HepG2 (cell line): ENCODE measurements at regions of chr17 and their contacts with region 1.

Region 1: DNA sequence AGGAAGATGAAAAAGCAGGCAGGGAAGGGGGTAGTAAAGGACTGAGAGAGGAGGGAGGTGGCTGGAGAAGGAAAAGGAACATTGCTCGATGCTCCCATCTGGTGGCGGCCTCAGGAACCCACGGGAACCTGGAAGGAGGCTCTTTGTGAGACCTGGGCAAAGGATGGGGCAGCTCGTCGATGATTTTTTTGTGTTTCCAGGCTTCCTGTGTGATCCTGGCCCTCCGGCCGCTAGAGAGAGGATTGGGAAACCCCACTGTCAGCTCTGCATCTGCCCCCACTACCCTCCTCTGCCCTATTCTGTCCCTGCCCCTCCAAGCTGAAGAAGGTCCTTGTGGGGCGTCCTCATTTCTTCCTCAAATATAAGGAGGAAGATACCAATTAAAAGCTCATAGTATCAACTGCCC is 6.6 kb downstream of the WFIKKN2 start:
- DNase-seq: peak; percentile 66
- ATAC-seq: peak; percentile 61
- H3K4me3 ChIP-seq: no peak overlapping the region
- H3K27ac ChIP-seq: no peak overlapping the region
- H3K4me1 ChIP-seq: peaks cover 77% of the 10 kb centered on the region
- H3K27me3 ChIP-seq: peaks cover 8 to 77% of the 10 kb centered on the region in 2 experiments; a peak in 4 of 5 replicates
- CTCF ChIP-seq: peak; percentile 93
- EP300 ChIP-seq: no peak
- POLR2A ChIP-seq: no peak
- RAD21 ChIP-seq: peak; percentile 84

Region 2: DNA sequence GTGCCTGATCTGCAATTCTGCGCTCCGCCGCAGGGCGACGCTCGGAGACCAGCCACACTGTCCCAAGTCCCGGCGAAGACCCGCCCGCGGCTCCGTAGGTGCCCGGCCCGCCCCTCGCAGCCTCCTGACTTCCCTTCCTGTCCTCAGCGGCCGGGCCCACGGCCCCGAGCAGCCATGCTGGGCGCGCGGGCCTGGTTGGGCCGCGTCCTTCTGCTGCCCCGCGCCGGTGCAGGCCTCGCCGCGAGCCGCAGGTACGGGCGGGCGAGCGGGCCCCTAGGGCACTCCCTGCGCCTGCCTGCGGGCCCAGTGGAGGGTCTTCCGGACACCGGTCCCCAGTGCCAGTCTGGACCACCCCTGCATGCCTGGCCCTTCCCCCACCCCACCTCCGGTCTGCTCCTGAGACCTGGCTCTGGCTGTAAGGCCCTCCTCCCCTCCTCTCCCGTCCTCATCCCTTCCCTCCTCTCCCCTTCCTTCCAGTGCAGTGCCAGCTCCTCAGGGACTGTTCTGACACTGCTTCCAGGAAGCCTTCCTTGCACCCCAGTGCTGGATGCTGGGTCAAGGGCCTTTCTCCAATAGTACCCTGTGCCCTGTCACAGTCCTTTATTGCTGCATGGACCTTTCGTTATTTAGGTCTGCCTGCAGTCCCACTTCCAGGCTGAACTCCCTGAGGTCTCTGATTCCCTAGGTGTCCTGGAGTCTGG is 294.8 kb before region 1 on chr17 and contains the start of gene SPATA20:
- CTCF ChIA-PET with region 1: interaction called, 4 read pairs
- POLR2A ChIA-PET with region 1: no interaction called
- in situ Hi-C with region 1: no loop called
- intact Hi-C with region 1: loop called (anchors 2 kb)
- DNase-seq: peak; percentile 88
- ATAC-seq: peak; percentile 76
- H3K4me3 ChIP-seq: peak within 1 kb of the TSS; percentile 63 to 87 (median 79)
- H3K27ac ChIP-seq: peak within 1 kb of the TSS; percentile 62
- H3K4me1 ChIP-seq: peaks cover 74% of the 10 kb centered on the region
- H3K27me3 ChIP-seq: no peaks in the 10 kb centered on the region; a peak in 1 of 5 replicates
- CTCF ChIP-seq: peak; percentile 99
- EP300 ChIP-seq: peak in 1 of 2 experiments; percentile 31; a peak in 1 of 4 replicates
- POLR2A ChIP-seq: peak; percentile 81 to 89
- RAD21 ChIP-seq: peak; percentile 100
- total RNA-seq, gene SPATA20: 35.7 and 64.8 TPM in 2 replicates

Region 3: GRCh38 chr17:50783193-50783660 is 58.7 kb before region 1 on chr17:
- CTCF ChIA-PET with region 1: interaction called, 94 read pairs
- POLR2A ChIA-PET with region 1: no interaction called
- in situ Hi-C with region 1: loop called (anchors 5 kb)
- intact Hi-C with region 1: loop called (anchors 1 kb)
- DNase-seq: peak; percentile 86
- ATAC-seq: peak; percentile 97
- H3K4me3 ChIP-seq: no peak overlapping the region
- H3K27ac ChIP-seq: no peak overlapping the region
- H3K4me1 ChIP-seq: peaks cover 23% of the 10 kb centered on the region
- H3K27me3 ChIP-seq: peaks cover 0 to 2% of the 10 kb centered on the region in 2 experiments; a peak in 1 of 5 replicates
- CTCF ChIP-seq: peak; percentile 99
- EP300 ChIP-seq: peak; percentile 16 to 45; a peak in 1 of 4 replicates
- POLR2A ChIP-seq: no peak
- RAD21 ChIP-seq: peak; percentile 99

Region 4: GRCh38 chr17:50800196-50800700 is 41.7 kb before region 1 on chr17:
- CTCF ChIA-PET with region 1: no interaction called
- POLR2A ChIA-PET with region 1: interaction called, 3 read pairs
- in situ Hi-C with region 1: no loop called
- intact Hi-C with region 1: loop called (anchors 5 kb)
- DNase-seq: no peak
- ATAC-seq: no peak
- H3K4me3 ChIP-seq: no peak overlapping the region
- H3K27ac ChIP-seq: no peak overlapping the region
- H3K4me1 ChIP-seq: peaks cover 78% of the 10 kb centered on the region
- H3K27me3 ChIP-seq: peaks cover 3 to 41% of the 10 kb centered on the region in 2 experiments; a peak in 4 of 5 replicates
- CTCF ChIP-seq: no peak
- EP300 ChIP-seq: no peak
- POLR2A ChIP-seq: no peak
- RAD21 ChIP-seq: no peak

Region 5: DNA sequence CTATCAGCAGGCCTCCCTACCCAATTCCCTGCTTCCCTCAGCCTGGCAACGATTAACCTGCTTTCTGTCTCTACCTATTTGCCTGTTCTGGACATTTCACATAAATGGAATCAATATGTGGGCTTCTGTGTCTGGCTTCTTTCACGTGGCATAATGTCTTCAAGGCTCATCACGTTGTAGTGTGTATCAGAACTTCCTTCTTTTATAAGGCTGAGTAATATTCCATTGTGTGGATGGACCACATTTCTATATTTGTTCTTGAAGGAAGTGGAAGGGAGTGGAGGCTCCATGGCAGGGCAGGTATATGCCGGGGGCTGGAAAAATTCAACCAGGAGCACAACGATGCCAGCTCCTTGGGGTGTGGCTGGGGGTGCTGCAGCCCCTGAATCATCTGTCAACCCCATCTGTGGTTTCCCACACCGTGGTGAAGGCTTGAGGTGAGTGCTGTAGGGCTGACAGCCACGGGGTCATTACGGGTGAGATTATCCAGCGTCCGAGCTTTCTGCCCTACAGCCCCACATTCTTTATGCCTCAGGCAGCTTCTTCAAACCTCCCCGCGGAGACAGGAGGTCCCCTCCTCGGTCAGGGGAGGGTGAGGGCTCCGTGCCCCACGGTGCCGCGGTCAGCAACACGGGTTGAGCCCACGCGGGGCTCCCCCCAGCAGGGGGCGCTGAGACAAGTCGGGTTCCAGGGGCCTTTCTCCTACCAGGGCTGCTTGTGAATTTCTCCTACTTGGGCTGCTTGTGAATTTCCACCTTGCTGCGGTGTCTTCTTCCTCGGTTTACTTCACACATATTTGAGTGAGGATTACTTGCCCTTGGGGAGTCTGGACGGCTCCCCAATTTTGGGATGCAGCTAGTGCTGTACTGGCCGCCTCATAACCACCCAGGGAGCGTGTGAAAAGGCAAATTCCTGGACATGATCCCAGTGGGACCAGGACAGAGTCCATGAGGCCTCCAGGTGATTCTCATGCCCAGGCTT is 24.9 kb before region 1 on chr17:
- CTCF ChIA-PET with region 1: interaction called, 19 read pairs
- POLR2A ChIA-PET with region 1: no interaction called
- in situ Hi-C with region 1: no loop called
- intact Hi-C with region 1: loop called (anchors 2 kb)
- DNase-seq: no peak
- ATAC-seq: peak; percentile 78
- H3K4me3 ChIP-seq: peak overlapping the region in 1 of 3 experiments; percentile 50; a peak in 2 of 6 replicates
- H3K27ac ChIP-seq: no peak overlapping the region
- H3K4me1 ChIP-seq: peaks cover 27% of the 10 kb centered on the region
- H3K27me3 ChIP-seq: peaks cover 0 to 33% of the 10 kb centered on the region in 2 experiments; a peak in 4 of 5 replicates
- CTCF ChIP-seq: peak; percentile 92
- EP300 ChIP-seq: no peak
- POLR2A ChIP-seq: no peak
- RAD21 ChIP-seq: peak; percentile 71